ENCODE measurements at regions of chr14 and their contacts with region 1.

Region 1: GRCh38 chr14:93939304-93940229 is 12.4 kb downstream of the FAM181A start:
- DNase-seq: peak; percentile 81 to 84
- ATAC-seq: peak; percentile 77 to 97
- H3K4me3 ChIP-seq: peak overlapping the region; percentile 40
- H3K27ac ChIP-seq: peak overlapping the region in 1 of 2 experiments; percentile 36; a peak in 2 of 6 replicates
- H3K4me1 ChIP-seq: peaks cover 15% of the 10 kb centered on the region; the same call in 2 of the 3 replicates
- CTCF ChIP-seq: peak; percentile 94
- EP300 ChIP-seq: no peak
- POLR2A ChIP-seq: no peak
- RAD21 ChIP-seq: peak; percentile 81 to 96

Region 2: GRCh38 chr14:93663317-93663716 is 276.2 kb before region 1 on chr14:
- CTCF ChIA-PET with region 1: no interaction called
- POLR2A ChIA-PET with region 1: no interaction called
- DNase-seq: no peak
- ATAC-seq: no peak
- H3K4me3 ChIP-seq: no peak overlapping the region
- H3K27ac ChIP-seq: no peak overlapping the region
- H3K4me1 ChIP-seq: no peaks in the 10 kb centered on the region
- CTCF ChIP-seq: no peak
- EP300 ChIP-seq: no peak
- POLR2A ChIP-seq: no peak
- RAD21 ChIP-seq: no peak

Region 3: GRCh38 chr14:93880021-93880820 is 59.3 kb before region 1 on chr14:
- CTCF ChIA-PET with region 1: no interaction called
- POLR2A ChIA-PET with region 1: no interaction called
- DNase-seq: no peak
- ATAC-seq: no peak
- H3K4me3 ChIP-seq: no peak overlapping the region
- H3K27ac ChIP-seq: no peak overlapping the region
- H3K4me1 ChIP-seq: no peaks in the 10 kb centered on the region
- CTCF ChIP-seq: no peak
- EP300 ChIP-seq: no peak
- POLR2A ChIP-seq: no peak
- RAD21 ChIP-seq: no peak

Region 4: DNA sequence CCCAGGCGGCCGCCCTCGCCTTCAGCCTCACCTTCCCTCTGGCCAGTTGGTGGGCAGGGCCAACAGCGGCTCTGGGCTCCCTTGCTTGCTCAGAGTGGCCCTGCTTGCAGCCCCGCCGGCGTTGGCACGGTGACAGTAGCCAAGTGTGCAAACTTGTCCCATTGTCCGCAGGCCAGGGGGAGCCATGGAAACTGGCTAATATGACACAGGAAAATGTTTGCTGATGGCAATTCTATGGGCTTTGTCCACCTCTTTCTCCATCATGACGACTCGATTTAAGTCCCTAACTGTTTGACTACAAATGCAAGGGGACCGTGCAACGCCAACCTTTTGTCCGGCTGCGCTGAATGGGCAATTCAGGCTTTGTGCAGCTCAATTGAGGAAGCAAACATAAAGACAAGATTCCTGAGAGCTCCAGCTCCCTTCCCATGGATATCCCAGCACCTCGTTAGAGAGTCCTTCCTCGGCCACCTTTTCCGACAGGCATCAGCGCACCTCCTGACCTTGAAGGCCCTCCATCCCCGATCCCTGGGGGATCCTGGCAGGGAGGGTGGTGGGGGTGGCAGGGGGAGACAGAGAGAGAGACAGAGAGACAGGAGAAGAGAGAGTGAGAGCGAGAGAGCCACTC is 13.2 kb before region 1 on chr14:
- CTCF ChIA-PET with region 1: interaction called, 17 read pairs
- POLR2A ChIA-PET with region 1: no interaction called
- DNase-seq: no peak
- ATAC-seq: no peak
- H3K4me3 ChIP-seq: no peak overlapping the region
- H3K27ac ChIP-seq: no peak overlapping the region
- H3K4me1 ChIP-seq: no peaks in the 10 kb centered on the region
- CTCF ChIP-seq: no peak
- EP300 ChIP-seq: no peak
- POLR2A ChIP-seq: no peak
- RAD21 ChIP-seq: no peak

Region 5: DNA sequence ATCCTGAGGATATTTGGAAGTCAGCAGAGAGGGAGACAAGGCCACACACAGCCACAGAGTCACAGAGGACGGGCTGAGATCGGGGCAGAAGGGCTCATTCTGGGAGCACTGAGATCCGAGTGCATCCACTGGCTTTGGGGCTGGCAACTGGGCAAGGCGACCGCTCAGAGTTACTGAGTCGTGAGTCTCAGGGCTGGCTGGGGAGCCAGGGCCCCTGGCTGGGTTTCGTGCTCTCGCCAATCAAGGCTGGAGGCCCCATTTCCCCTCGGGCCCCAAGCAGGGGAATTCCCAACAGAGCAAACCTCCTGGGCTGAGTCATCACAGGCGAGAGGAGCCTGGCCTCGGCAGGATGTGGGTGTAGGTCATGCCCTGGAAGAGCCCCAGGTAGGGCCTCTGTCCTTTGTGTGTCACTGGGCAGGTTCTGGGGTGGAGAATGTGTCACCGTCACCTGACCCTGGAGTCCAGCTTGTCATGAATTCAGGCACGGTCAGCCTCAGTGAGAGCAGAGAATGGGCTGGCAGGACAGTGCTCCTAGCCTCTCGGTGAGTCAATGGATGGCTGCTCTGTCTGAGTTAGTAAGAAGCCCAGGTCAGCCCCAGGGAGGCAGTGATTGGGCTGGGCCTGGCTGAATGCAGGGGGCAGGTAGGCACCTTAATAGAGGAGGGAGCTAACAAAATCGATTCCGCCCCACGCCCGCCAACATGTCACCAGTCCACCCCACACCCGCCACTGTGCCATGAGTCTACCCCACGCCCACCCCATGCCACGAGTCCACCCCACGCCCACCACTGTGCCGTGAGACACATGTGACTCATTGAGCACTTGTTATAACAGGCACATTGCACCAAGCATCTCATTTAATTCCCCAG is 19.9 kb after region 1 on chr14:
- CTCF ChIA-PET with region 1: interaction called, 601 read pairs
- POLR2A ChIA-PET with region 1: no interaction called
- DNase-seq: peak; percentile 85 to 92
- ATAC-seq: peak; percentile 90 to 92
- H3K4me3 ChIP-seq: no peak overlapping the region
- H3K27ac ChIP-seq: peak overlapping the region; percentile 56 to 81; a peak in 5 of 6 replicates
- H3K4me1 ChIP-seq: peaks cover 22% of the 10 kb centered on the region
- CTCF ChIP-seq: no peak
- EP300 ChIP-seq: peak in 1 of 2 experiments; percentile 70; a peak in 2 of 5 replicates
- POLR2A ChIP-seq: no peak
- RAD21 ChIP-seq: 0 out of 5 replicates have a peak, but pooled peaks of 1 of the 2 experiments have one; percentile 5

Region 6: DNA sequence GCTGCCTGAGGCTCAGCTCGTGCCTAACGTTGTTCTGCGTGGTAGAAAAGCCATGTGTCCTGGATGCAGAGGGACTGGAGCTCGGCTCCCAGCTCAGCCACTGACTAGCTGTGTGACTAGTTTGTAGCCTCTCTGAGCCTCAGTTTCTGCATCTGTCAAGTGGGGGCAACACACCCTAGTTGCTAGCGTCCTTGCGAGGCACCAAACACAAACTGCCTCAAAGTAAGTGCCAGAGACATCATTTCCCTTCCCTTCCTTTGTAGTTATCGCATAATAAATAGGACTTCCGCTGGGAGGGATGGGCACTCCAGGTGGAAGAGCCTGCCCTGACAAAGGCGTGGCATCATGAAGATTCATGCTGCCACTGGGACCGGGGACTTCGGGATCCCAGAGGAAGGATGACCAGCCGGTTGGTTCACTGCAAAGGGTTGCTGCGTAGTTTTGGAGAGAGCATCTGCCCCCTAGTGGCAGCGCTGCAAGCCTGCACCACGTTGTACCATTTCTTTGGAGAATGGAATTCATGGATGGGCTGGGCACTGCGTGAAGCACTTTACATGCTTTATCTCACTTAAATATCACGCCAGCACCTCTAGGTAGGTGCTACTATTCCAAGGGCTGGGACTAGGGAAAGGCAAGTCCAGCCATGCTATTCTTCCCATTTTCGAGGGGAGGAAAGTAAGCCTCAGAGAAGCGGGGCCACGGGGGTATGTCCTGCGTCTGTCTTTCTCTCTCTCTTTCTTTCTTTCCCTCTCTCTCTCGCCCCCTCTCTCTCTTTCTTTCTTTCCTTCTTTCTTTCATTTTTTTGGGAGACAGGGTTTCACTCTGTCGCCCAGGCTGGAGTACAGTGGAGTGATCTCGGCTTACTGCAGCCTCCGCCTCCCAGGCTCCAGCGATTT is 62.2 kb after region 1 on chr14:
- CTCF ChIA-PET with region 1: interaction called, 400 read pairs
- POLR2A ChIA-PET with region 1: interaction called, 3 read pairs
- DNase-seq: peak; percentile 73 to 83
- ATAC-seq: peak; percentile 81 to 94
- H3K4me3 ChIP-seq: no peak overlapping the region
- H3K27ac ChIP-seq: no peak overlapping the region; a peak in 1 of 6 replicates
- H3K4me1 ChIP-seq: no peaks in the 10 kb centered on the region
- CTCF ChIP-seq: peak; percentile 91
- EP300 ChIP-seq: no peak
- POLR2A ChIP-seq: no peak
- RAD21 ChIP-seq: peak; percentile 79 to 88

Region 7: GRCh38 chr14:94021001-94021400 is 81.4 kb after region 1 on chr14:
- CTCF ChIA-PET with region 1: interaction called, 66 read pairs
- POLR2A ChIA-PET with region 1: no interaction called
- DNase-seq: peak in 1 of 2 experiments; percentile 22
- ATAC-seq: peak; percentile 21 to 37; a peak in 2 of 6 replicates
- H3K4me3 ChIP-seq: no peak overlapping the region
- H3K27ac ChIP-seq: no peak overlapping the region
- H3K4me1 ChIP-seq: no peaks in the 10 kb centered on the region
- CTCF ChIP-seq: no peak
- EP300 ChIP-seq: no peak
- POLR2A ChIP-seq: no peak
- RAD21 ChIP-seq: no peak

Region 8: DNA sequence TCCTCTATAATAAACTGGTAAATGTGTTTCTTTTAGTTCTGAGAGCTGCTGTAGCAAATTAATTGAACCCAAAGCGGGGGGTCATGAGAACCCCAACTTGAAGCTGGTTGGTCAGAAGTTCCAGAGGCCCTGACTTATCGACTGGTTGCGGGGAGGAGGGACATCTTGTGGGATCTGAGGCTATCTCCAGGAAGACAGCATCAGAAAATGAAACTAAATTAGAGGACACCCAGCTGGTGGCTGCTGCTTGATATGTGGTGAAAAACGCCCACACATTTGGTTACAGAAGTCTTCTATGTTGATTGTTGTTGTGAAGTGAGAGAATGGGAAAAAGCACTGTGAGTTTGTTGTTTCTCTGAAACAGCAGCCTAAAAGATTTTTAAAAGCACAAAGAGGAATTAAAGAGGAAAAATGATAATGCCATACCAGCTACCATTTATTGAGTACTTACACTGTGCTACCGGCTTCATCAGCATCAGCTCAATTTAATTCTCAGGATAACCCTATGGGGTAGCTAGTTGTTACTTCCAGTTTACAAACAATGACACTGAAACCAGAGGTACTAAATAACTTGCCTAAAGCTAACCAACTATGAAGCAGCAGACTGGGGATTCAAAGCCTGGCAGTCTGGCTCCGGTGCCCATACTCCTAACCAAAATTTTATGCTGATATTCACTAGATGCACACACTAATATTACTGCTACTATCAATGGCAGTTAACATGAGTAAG is 117.2 kb after region 1 on chr14:
- CTCF ChIA-PET with region 1: interaction called, 15 read pairs
- POLR2A ChIA-PET with region 1: no interaction called
- DNase-seq: no peak
- ATAC-seq: no peak
- H3K4me3 ChIP-seq: no peak overlapping the region
- H3K27ac ChIP-seq: no peak overlapping the region
- H3K4me1 ChIP-seq: no peaks in the 10 kb centered on the region
- CTCF ChIP-seq: no peak
- EP300 ChIP-seq: no peak
- POLR2A ChIP-seq: no peak
- RAD21 ChIP-seq: no peak

Region 9: DNA sequence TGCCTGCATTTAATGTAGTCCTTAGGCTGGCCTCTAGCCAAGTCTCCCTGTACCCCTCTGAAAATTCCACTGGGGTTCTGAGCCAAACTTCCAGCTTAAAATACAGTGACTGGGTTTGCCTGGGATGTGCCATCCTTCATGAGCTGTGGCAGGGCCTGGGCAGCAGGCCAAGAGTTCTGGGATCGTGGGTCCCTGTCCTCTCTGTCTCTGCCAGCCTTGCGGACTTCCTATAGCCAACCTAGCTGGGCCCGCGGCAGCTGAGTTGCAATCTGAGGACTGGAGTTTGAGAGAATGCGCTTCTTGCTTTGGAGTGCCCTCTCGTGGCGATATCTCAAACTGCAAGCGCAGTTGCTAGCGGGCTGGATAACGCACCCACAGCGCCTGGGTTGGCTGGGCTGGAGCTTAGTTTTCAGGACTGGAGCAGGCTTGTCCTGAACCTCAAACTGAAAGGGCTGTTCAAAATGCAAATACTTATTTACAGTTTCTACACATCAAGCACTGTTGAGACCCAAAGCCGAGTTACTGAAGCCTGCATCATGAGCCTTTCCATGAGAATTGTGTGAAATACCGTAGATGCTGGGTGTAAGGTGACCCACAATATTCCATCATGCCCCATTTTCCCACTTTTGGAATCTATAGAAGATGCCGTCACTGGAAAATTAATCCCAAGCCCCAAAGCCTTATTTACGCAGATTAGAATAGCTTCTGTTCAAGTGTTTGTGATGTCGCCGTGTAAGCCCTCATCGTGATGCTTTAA is 197.2 kb after region 1 on chr14:
- CTCF ChIA-PET with region 1: interaction called, 40 read pairs
- POLR2A ChIA-PET with region 1: no interaction called
- DNase-seq: peak; percentile 74 to 83
- ATAC-seq: peak; percentile 87 to 98
- H3K4me3 ChIP-seq: no peak overlapping the region
- H3K27ac ChIP-seq: no peak overlapping the region
- H3K4me1 ChIP-seq: no peaks in the 10 kb centered on the region
- CTCF ChIP-seq: peak; percentile 85
- EP300 ChIP-seq: no peak
- POLR2A ChIP-seq: no peak
- RAD21 ChIP-seq: peak; percentile 84 to 93

Region 10: DNA sequence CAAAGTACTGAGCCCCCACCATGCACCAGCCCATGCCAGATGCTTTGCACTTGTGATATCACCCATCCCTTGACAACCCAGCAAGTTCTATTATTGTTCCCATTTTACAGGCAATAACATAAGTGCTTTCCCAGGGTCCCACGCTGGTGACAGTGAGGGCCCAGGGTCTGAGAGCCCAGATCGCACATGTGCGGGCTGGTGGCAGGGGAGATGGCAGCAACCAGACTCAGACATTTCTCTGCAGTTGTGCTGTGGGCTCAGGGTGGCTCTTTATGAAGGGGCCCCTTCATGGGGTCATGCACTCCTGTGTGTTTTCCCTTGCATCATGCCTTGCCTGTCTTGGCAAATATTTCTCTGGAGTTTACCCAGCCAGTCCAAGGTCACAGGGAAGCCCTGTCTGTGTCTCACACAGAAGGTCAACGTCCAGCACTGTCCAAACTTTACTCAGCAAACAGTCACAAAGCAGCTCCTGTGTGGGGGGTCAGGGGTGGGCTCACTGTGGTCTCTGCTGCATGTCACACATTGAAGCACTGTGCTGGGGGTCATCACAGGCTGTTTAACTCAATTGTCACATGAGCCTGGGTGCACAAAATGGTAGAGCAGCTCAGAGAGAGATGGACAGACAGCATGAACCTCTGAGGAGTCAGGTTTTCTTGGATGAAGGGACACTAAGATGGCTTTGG is 654.3 kb after region 1 on chr14:
- CTCF ChIA-PET with region 1: no interaction called
- POLR2A ChIA-PET with region 1: no interaction called
- DNase-seq: peak in 1 of 2 experiments; percentile 35
- ATAC-seq: no peak
- H3K4me3 ChIP-seq: no peak overlapping the region
- H3K27ac ChIP-seq: peak overlapping the region; percentile 97 to 98
- H3K4me1 ChIP-seq: peaks cover 44% of the 10 kb centered on the region
- CTCF ChIP-seq: no peak
- EP300 ChIP-seq: peak; percentile 29 to 41; a peak in 1 of 5 replicates
- POLR2A ChIP-seq: no peak
- RAD21 ChIP-seq: no peak

Measured in A549 (cell line).